Pancreas (tissue), 10 donors: ENCODE measurements at regions of chr22 and their contacts with region 1.

Region 1: GRCh38 chr22:25465949-25466348 is 98.5 kb upstream of the GRK3 start:
- DNase-seq: no peak
- ATAC-seq: no peak
- H3K4me3 ChIP-seq: no peak overlapping the region
- H3K27ac ChIP-seq: no peak overlapping the region
- H3K4me1 ChIP-seq: no peaks in the 10 kb centered on the region
- H3K27me3 ChIP-seq: no peaks in the 10 kb centered on the region
- CTCF ChIP-seq: no peak

Region 2: GRCh38 chr22:25346859-25347751 is 118.8 kb before region 1 on chr22:
- intact Hi-C with region 1: no loop called
- DNase-seq: peak in 2 of 6 donors; percentile 50 to 53
- ATAC-seq: peak in 1 of 4 donors; percentile 20
- H3K4me3 ChIP-seq: no peak overlapping the region
- H3K27ac ChIP-seq: no peak overlapping the region
- H3K4me1 ChIP-seq: no peaks in the 10 kb centered on the region
- H3K27me3 ChIP-seq: no peaks in the 10 kb centered on the region
- CTCF ChIP-seq: no peak

Region 3: DNA sequence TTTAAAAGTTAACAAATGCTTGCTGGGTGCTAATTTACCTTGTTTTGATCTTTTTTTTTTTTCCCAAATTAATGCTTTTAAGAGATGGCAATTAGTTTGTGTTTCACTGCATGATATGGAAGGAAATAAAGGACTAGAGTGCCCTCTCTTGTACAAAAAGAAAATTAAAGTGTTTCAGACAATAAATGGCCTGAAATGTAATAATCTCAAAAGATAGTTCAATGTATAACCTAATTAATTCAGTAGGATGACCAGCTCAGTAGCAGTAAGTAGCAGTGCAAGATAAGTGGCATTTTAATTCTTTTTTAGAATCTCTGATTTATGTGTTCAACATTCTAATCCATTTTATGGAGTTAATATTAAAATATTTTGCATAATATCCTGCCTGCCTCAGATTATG is 236.1 kb after region 1 on chr22:
- intact Hi-C with region 1: loop called in 2 of 3 experiments (anchors 10 kb)
- DNase-seq: no peak
- ATAC-seq: peak in 3 of 4 donors; percentile 63 to 67 (median 65)
- H3K4me3 ChIP-seq: no peak overlapping the region
- H3K27ac ChIP-seq: no peak overlapping the region
- H3K4me1 ChIP-seq: no peaks in the 10 kb centered on the region
- H3K27me3 ChIP-seq: no peaks in the 10 kb centered on the region
- CTCF ChIP-seq: peak in 1 of 4 donors; percentile 21

Region 4: DNA sequence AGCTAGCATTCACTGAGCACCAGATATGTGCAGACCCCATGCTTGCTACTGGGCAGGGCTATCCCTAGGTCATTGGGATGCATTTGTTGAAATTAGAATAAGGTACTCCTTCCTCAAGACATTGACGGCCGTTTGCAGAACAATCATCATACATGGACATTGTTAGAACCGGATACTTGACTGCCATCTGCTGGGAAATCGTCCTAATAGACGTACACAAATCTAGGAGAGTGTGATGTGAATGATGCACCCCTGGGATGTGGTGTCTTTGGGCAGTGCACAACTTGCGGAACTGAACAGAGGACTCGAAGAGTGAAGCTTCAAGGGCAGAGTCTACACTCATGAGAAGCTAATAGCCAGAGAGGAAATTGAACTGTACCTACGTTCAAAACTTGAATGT is 311.9 kb after region 1 on chr22:
- intact Hi-C with region 1: loop called in 2 of 3 experiments (anchors 5 to 10 kb)
- DNase-seq: no peak
- ATAC-seq: peak in 2 of 4 donors; percentile 29 to 43
- H3K4me3 ChIP-seq: no peak overlapping the region
- H3K27ac ChIP-seq: no peak overlapping the region
- H3K4me1 ChIP-seq: no peaks in the 10 kb centered on the region
- H3K27me3 ChIP-seq: no peaks in the 10 kb centered on the region
- CTCF ChIP-seq: no peak